K562 (cell line): ENCODE measurements at regions of chr18 and their contacts with region 1.

Region 1: DNA sequence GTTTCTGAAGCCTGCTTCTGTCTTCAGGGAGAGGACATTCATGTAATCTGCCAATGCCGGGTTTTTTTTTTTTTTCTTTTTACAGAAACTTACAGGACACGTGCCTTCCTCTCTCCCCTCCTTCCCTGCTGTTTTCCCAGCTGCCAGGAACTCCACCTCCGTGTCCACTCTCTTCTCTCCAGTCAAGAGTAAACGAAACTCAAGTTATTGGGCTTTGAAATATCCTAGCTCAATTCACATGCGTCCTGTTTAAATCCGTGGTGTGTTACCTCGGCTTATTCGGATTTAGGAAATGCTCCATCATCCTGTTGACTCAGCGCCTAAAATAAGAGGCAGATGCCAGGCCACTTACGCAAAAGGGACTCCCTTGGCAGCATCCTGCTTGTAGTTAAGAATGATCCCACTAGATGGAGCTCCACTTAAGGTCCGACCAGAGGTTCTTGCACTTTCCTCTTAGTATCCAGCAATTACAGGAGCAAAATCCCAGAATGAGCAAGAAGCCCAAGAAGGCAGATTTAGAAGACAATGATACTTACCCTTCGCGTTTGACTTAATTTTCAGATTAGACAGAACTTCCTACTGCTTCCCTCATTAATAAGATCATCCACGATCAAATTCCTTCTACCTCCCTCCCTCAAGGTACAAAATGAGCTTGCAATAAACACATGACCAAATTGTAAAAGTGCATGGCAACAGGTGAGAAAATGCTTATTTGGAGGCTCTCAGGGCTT is 97.2 kb upstream of the ZCCHC2 start:
- DNase-seq: peak; percentile 41 to 82 (median 50)
- ATAC-seq: peak; percentile 83
- H3K4me3 ChIP-seq: no peak overlapping the region
- H3K27ac ChIP-seq: no peak overlapping the region
- H3K4me1 ChIP-seq: peaks cover 2 to 10% of the 10 kb centered on the region in 2 experiments; a peak in 2 of 5 replicates
- H3K27me3 ChIP-seq: no peaks in the 10 kb centered on the region
- CTCF ChIP-seq: peak; percentile 67 to 83 (median 79)
- EP300 ChIP-seq: no peak
- POLR2A ChIP-seq: no peak
- RAD21 ChIP-seq: peak; percentile 62 to 81

Region 2: DNA sequence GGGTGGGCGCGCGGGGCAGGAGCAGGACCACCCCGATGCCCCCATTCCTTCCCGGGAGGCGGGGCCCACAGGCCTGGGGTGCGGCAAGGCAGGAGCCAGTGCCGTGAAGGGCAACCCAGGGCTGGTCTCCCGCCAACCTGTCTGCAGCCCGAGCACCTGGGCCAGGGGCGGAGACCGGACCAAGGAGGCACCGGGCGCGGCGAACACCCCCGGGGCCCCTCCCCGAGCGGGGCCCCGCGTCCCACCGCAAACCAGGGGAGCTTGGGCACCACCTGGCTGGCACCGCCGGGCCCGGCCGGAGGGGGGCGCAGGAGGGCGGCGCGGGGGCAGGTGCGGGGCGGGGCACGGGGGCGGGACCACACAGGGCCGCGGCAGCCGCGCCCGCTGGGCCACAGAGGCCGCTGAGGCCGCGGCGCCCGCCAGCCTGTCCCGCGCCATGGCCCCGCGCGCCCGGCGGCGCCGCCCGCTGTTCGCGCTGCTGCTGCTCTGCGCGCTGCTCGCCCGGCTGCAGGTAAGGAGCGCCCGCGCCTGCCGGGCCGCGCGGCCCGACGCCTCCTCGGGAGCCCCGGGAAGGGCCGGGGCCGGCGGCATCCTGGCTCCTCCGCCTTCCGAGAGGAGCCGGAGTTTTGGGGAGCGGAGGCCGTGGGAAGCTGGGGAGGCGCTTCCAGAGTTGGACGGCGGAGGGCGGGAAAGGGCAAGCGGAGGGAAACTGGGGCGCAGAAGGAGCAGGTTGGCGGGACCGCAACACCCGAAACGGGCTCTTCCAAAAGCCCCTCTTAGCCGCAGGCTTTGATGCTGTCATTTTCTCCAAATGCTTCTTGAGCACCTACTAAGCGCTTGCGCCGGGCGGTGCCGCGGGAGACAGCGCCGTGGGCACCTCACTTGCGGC is 100.5 kb before region 1 on chr18 and contains the start of gene TNFRSF11A:
- CTCF ChIA-PET with region 1: no interaction called
- POLR2A ChIA-PET with region 1: no interaction called
- in situ Hi-C with region 1: no loop called
- intact Hi-C with region 1: no loop called
- DNase-seq: peak; percentile 46 to 83 (median 80)
- ATAC-seq: peak; percentile 95
- H3K4me3 ChIP-seq: peak within 1 kb of the TSS; percentile 37
- H3K27ac ChIP-seq: no peak within 1 kb of the TSS
- H3K4me1 ChIP-seq: peaks cover 4 to 20% of the 10 kb centered on the region in 2 experiments; a peak in 3 of 5 replicates
- H3K27me3 ChIP-seq: peaks cover 20 to 30% of the 10 kb centered on the region in 2 experiments
- CTCF ChIP-seq: peak in 2 of 3 experiments; percentile 25 to 48; a peak in 2 of 6 replicates
- EP300 ChIP-seq: no peak
- POLR2A ChIP-seq: no peak
- RAD21 ChIP-seq: no peak
- polyA plus RNA-seq, gene TNFRSF11A: not detected

Region 3: DNA sequence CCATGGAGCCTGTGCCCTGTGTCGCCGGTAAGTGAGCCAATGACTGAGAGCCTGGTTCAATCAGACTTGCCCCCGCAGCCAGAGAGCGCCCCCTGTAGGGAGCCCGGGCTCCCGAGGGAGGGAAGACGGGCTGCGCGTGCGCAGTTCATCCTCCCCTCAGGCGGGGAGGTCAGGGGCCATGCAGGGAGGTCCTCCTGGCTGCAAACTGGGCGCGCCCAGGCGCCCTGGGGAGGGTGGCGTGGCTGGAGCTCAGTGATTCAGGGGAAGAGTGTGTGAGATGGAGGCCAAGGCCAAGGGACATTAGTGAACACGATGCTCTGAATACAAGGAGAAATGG is 566.4 kb after region 1 on chr18:
- CTCF ChIA-PET with region 1: no interaction called
- POLR2A ChIA-PET with region 1: no interaction called
- in situ Hi-C with region 1: no loop called
- intact Hi-C with region 1: loop called (anchors 5 kb)
- DNase-seq: peak; percentile 82 to 90 (median 88)
- ATAC-seq: peak; percentile 93
- H3K4me3 ChIP-seq: no peak overlapping the region
- H3K27ac ChIP-seq: no peak overlapping the region
- H3K4me1 ChIP-seq: peaks cover 4 to 14% of the 10 kb centered on the region in 2 experiments; a peak in 4 of 5 replicates
- H3K27me3 ChIP-seq: no peaks in the 10 kb centered on the region
- CTCF ChIP-seq: peak; percentile 65 to 74 (median 68)
- EP300 ChIP-seq: no peak
- POLR2A ChIP-seq: no peak
- RAD21 ChIP-seq: peak in 1 of 2 experiments; percentile 51; a peak in 2 of 4 replicates